SK-N-SH (cell line): ENCODE measurements at regions of chr16 and their contacts with region 1.

Region 1: DNA sequence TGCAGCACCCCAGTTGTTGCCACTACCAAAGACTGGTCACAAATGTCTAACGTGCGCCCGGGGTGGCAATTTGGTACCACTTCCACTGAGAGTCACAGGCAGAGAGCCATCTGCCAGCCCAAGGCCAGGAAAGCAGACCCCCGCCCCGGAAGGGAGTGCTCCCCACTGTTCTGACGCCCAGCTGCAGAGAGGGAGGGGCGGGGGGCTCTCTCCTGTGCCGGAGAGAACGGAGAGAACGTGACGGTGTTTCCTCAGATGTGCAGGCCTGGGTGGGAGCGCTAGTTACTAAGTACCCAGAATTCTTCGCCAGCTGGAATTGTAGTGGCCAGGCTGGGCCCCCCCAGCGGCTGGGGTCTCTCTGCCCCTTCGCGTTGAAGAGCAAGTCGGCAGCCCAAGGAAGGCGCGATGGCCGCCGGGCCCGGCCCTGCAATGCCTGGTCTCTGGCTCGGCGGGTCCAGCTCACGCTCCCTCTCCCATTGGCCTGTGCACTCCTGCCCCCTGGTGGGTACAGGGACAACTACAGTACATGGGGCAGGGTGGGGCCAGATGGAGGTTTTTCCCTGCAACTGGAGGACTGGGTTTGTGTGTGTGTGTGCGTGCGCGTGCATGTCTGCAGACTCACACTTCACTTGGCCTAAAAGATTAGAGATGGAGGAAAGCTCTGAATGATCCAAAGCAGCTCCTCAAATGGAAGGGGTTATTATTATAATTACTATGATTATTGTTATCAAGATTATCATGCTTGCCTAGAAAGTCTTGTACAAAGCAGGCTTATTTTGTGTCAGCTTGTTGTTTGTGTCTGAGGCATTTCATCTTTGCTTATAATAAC is 107.1 kb downstream of the AMFR start:
- DNase-seq: peak; percentile 97
- H3K4me3 ChIP-seq: no peak overlapping the region; a peak in 1 of 4 replicates
- H3K27ac ChIP-seq: peak overlapping the region in 1 of 2 experiments; percentile 16; a peak in 1 of 4 replicates
- H3K4me1 ChIP-seq: peaks cover 0 to 25% of the 10 kb centered on the region in 2 experiments; a peak in 1 of 4 replicates
- H3K27me3 ChIP-seq: no peaks in the 10 kb centered on the region; the same call in 1 of the 2 replicates
- CTCF ChIP-seq: peak; percentile 84
- EP300 ChIP-seq: no peak
- RAD21 ChIP-seq: peak; percentile 96

Region 2: GRCh38 chr16:55944377-55944802 is 373.8 kb before region 1 on chr16:
- CTCF ChIA-PET with region 1: interaction called, 104 read pairs
- POLR2A ChIA-PET with region 1: no interaction called
- DNase-seq: peak; percentile 68
- H3K4me3 ChIP-seq: peak overlapping the region in 1 of 2 experiments; percentile 42; a peak in 1 of 4 replicates
- H3K27ac ChIP-seq: no peak overlapping the region
- H3K4me1 ChIP-seq: no peaks in the 10 kb centered on the region; a peak in 1 of 4 replicates
- H3K27me3 ChIP-seq: no peaks in the 10 kb centered on the region
- CTCF ChIP-seq: peak; percentile 93
- EP300 ChIP-seq: no peak
- RAD21 ChIP-seq: peak; percentile 88

Region 3: DNA sequence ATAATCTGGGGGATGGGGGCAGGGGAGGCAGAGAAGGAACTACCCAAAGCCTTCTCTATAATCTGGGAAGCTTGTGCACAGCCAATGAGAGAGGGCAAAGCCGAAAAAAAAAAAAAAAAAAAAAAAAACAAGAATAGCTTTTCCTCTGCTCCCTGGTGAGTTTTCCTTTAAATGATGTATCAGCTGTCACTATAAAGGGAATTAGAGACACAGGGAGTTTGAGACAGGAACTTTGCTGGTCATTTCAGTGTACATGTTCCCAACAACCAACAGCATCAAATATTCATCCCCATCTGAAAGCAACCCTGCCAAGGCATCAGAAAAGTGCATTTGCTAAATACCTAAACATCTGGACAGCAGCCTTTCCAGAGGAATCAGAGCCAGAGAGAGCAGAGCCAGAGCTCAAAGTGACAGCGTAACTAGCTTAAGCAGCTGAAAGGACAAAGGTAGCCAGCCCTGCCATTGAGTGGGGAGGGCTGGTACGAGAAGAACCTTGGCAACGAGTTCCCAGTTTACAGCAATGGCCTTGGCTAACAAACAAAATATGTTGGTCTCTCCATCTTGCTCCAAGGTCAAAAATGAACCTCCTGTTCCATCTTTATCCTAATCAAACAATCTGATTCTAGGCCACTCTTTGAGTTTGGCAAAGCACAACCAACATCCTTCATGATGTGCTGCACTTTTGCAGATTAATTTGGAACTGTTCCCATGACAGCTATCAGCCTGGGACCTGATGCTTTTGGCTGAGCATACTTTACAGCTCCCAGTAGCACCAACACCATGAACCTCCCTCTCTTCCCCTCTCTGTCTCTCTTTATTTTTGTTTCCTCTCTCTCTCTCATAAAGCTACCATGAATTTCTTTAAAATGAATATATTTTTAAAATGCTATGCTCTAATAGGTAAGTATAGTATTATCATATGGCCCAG is 270.6 kb before region 1 on chr16:
- CTCF ChIA-PET with region 1: interaction called, 63 read pairs
- POLR2A ChIA-PET with region 1: no interaction called
- DNase-seq: peak; percentile 59
- H3K4me3 ChIP-seq: no peak overlapping the region
- H3K27ac ChIP-seq: peak overlapping the region in 1 of 2 experiments; percentile 62; a peak in 2 of 4 replicates
- H3K4me1 ChIP-seq: peaks cover 0 to 17% of the 10 kb centered on the region in 2 experiments; a peak in 1 of 4 replicates
- H3K27me3 ChIP-seq: no peaks in the 10 kb centered on the region
- CTCF ChIP-seq: no peak
- EP300 ChIP-seq: no peak
- RAD21 ChIP-seq: peak; percentile 8; the same call in 1 of the 2 replicates

Region 4: DNA sequence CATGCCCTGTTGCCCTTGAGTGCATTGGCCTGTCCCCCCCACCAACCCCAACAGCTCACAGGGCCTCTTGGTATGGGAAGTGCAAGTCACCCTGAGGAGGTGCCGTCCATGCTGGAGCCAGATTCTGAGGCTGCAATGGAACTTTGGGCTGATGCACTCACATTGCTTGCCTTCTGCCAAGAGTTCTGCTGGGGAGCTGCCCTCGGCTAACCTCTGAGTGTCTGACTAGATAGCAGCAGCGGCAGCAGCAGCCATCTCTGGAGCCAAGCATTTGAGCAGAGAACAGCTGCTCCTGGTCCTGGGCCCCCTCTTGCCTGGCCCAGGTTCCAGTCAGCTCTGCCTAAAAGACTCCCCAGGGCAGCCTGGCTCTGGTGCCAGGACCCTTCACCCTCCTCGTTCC is 65.4 kb before region 1 on chr16:
- CTCF ChIA-PET with region 1: interaction called, 12 read pairs
- POLR2A ChIA-PET with region 1: no interaction called
- DNase-seq: no peak
- H3K4me3 ChIP-seq: no peak overlapping the region
- H3K27ac ChIP-seq: peak overlapping the region in 1 of 2 experiments; percentile 79; a peak in 1 of 4 replicates
- H3K4me1 ChIP-seq: peaks cover 0 to 42% of the 10 kb centered on the region in 2 experiments; a peak in 2 of 4 replicates
- H3K27me3 ChIP-seq: 0 out of 2 replicates have a peak, but pooled peaks cover 3% of the 10 kb centered on the region
- CTCF ChIP-seq: no peak
- EP300 ChIP-seq: no peak
- RAD21 ChIP-seq: no peak

Region 5: DNA sequence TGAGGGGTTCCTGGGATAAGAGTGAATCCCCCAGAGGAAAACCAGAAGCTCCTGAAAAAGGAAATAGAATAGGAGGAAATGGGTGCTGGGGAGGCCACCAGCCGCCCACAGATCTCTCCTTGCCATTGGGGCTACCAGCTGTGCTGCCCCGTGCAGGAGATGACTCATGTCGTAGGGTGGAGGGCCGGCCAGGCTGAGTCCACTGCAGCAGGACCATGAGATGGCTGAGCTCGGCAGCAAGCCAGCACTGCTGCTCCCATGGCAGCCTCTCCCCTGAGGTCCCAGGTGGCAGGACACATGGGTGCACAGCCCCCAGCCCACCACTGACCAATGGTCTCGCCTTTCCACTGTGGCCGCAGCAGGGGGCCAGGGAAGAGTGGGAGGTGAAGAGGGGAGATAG is 31.4 kb before region 1 on chr16:
- CTCF ChIA-PET with region 1: interaction called, 11 read pairs
- POLR2A ChIA-PET with region 1: no interaction called
- DNase-seq: no peak
- H3K4me3 ChIP-seq: no peak overlapping the region
- H3K27ac ChIP-seq: no peak overlapping the region
- H3K4me1 ChIP-seq: peaks cover 0 to 16% of the 10 kb centered on the region in 2 experiments; a peak in 1 of 4 replicates
- H3K27me3 ChIP-seq: no peaks in the 10 kb centered on the region
- CTCF ChIP-seq: no peak
- EP300 ChIP-seq: no peak
- RAD21 ChIP-seq: no peak

Region 6: GRCh38 chr16:56341656-56342399 is 23.6 kb after region 1 on chr16:
- CTCF ChIA-PET with region 1: interaction called, 10 read pairs
- POLR2A ChIA-PET with region 1: no interaction called
- DNase-seq: no peak
- H3K4me3 ChIP-seq: no peak overlapping the region
- H3K27ac ChIP-seq: peak overlapping the region in 1 of 2 experiments; percentile 50; a peak in 1 of 4 replicates
- H3K4me1 ChIP-seq: peaks cover 0 to 13% of the 10 kb centered on the region in 2 experiments; a peak in 1 of 4 replicates
- H3K27me3 ChIP-seq: no peaks in the 10 kb centered on the region
- CTCF ChIP-seq: no peak
- EP300 ChIP-seq: no peak
- RAD21 ChIP-seq: no peak

Region 7: DNA sequence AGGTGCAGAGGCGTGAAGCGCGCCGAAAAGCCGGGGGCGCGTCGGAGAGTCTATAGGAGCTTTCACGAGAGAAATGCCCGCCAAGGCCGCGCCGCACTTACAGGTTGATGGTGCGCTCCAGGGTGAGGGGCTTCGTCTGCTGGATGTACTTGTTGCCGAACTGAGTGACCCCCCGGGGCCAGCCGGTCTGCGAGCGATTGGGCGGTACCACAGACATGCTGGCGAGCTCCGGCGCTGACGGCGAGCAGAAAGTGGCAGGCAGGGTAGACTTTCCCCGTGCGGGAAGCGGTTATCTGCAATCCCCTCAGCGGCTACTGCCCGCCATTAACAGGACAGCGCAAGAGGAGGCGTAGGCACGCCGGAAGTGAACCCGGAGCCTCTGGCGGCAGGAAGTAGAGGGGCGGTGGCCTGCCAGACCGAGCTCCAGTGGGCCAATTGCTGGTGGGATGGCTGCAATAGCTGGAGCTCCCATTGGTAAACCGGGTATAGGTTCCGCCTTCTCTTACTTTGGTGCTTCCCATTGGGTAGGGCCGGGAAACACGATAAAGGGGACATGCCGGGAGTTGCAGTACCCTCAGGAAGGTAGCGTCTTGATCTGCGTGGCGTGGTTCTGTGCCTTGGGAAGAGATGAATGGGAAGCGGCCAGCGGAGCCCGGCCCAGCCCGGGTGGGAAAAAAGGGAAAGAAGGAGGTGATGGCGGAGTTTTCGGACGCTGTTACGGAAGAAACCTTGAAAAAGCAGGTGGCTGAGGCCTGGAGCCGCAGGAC is 133.0 kb after region 1 on chr16 and contains the starts of genes NUDT21 and OGFOD1:
- CTCF ChIA-PET with region 1: no interaction called
- POLR2A ChIA-PET with region 1: no interaction called
- DNase-seq: peak; percentile 97
- H3K4me3 ChIP-seq: peak within 1 kb of the TSS; percentile 93 to 97
- H3K27ac ChIP-seq: peak within 1 kb of the TSS; percentile 72 to 91
- H3K4me1 ChIP-seq: peaks cover 22 to 27% of the 10 kb centered on the region in 2 experiments; a peak in 3 of 4 replicates
- H3K27me3 ChIP-seq: no peaks in the 10 kb centered on the region
- CTCF ChIP-seq: no peak; the same call in 1 of the 2 replicates
- EP300 ChIP-seq: no peak; a peak in 1 of 4 replicates
- RAD21 ChIP-seq: no peak
- polyA plus RNA-seq, gene NUDT21: 42.2 and 45.5 TPM in 2 replicates
- polyA plus RNA-seq, gene OGFOD1: 29.9 and 35.6 TPM in 2 replicates